SK-N-SH (cell line): ENCODE measurements at regions of chr1 and their contacts with region 1.

Region 1: DNA sequence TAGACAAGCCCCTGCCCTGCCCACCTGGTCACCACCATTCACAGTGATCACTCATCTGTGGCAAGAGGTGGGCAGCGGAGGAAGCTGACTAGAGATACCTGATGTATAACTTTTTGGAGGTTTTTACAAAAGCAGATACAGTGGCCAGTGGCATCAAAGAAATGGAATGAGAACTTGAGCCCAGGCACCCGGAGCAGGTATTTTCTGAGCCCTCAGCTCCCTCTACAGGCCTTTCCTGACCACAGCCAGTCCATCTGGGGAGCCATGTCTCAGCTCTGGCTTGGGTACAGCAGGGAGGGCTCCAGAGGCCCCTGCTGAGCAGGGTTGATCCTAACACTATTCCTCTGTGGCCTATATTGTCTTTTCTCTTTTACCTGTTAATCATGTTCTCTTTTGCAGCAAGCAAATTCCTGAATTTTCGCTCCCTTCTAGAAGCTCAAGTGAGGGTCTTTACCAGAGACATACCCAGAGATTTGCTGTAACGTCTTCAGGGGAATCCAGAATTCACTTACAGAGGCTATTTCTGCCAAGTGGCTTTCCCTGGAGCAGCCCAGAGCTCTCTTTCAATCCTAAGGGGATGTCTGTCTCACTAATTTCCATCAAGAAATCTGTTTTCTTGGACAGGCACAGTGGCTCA is 27.3 kb downstream of the GPR157 start:
- DNase-seq: peak; percentile 68
- H3K4me3 ChIP-seq: no peak overlapping the region
- H3K27ac ChIP-seq: no peak overlapping the region
- H3K4me1 ChIP-seq: no peaks in the 10 kb centered on the region
- H3K27me3 ChIP-seq: no peaks in the 10 kb centered on the region
- CTCF ChIP-seq: peak; percentile 61
- EP300 ChIP-seq: no peak
- RAD21 ChIP-seq: peak; percentile 73

Region 2: DNA sequence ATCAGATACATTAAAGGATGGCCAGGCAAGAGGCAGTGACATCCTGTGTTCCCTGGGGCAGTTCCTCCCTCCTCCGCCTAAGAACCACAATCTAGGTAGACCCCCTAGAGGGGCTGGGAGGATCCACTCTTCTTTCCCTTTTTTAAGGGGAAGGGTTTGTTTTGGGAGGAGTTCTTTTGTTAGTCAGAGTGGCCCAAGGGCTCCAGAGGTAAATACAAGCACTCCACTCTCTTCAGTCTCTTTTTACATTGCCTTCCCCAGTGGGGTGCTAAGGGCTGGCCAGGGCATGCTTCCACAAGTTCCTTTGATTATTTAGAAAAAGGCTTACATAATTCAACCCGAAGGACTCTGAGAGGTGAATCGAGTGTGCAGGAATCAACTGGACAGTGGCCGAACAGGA is 190.2 kb before region 1 on chr1:
- CTCF ChIA-PET with region 1: interaction called, 10 read pairs
- POLR2A ChIA-PET with region 1: no interaction called
- DNase-seq: no peak
- H3K4me3 ChIP-seq: no peak overlapping the region
- H3K27ac ChIP-seq: no peak overlapping the region
- H3K4me1 ChIP-seq: no peaks in the 10 kb centered on the region
- H3K27me3 ChIP-seq: no peaks in the 10 kb centered on the region
- CTCF ChIP-seq: no peak
- EP300 ChIP-seq: no peak
- RAD21 ChIP-seq: no peak

Region 3: DNA sequence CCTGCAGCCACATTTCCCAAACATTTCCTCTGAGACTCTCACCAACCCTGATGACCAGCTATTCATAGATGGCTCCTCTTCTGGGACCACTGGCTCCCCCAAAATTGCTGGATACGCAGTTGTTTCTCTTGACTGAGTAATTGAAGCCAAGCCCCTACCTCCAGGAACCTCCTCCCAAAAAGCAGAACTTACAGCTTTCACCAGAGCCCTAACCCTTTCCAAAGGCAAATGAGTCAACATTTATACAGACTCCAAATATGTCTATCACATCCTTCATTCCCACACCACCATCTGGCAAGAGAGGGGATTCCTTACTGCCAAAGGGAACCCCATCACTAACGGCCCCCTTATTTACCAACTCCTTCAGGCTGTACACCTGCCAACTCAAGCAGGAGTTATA is 176.2 kb before region 1 on chr1:
- CTCF ChIA-PET with region 1: interaction called, 24 read pairs
- POLR2A ChIA-PET with region 1: no interaction called
- DNase-seq: no peak
- H3K4me3 ChIP-seq: no peak overlapping the region
- H3K27ac ChIP-seq: no peak overlapping the region
- H3K4me1 ChIP-seq: no peaks in the 10 kb centered on the region
- H3K27me3 ChIP-seq: no peaks in the 10 kb centered on the region
- CTCF ChIP-seq: no peak
- EP300 ChIP-seq: no peak
- RAD21 ChIP-seq: no peak

Region 4: GRCh38 chr1:8987881-8988617 is 113.6 kb before region 1 on chr1:
- CTCF ChIA-PET with region 1: interaction called, 10 read pairs
- POLR2A ChIA-PET with region 1: no interaction called
- DNase-seq: peak; percentile 78
- H3K4me3 ChIP-seq: no peak overlapping the region; a peak in 1 of 4 replicates
- H3K27ac ChIP-seq: peak overlapping the region in 1 of 2 experiments; percentile 45; a peak in 1 of 4 replicates
- H3K4me1 ChIP-seq: no peaks in the 10 kb centered on the region; a peak in 1 of 4 replicates
- H3K27me3 ChIP-seq: no peaks in the 10 kb centered on the region
- CTCF ChIP-seq: peak; percentile 89
- EP300 ChIP-seq: no peak
- RAD21 ChIP-seq: peak; percentile 80

Region 5: GRCh38 chr1:9084906-9085305 is 16.7 kb before region 1 on chr1:
- CTCF ChIA-PET with region 1: interaction called, 10 read pairs
- POLR2A ChIA-PET with region 1: no interaction called
- DNase-seq: no peak
- H3K4me3 ChIP-seq: no peak overlapping the region
- H3K27ac ChIP-seq: no peak overlapping the region; a peak in 1 of 4 replicates
- H3K4me1 ChIP-seq: peaks cover 0 to 7% of the 10 kb centered on the region in 2 experiments; a peak in 1 of 4 replicates
- H3K27me3 ChIP-seq: no peaks in the 10 kb centered on the region; the same call in 1 of the 2 replicates
- CTCF ChIP-seq: no peak
- EP300 ChIP-seq: no peak
- RAD21 ChIP-seq: no peak

Region 6: DNA sequence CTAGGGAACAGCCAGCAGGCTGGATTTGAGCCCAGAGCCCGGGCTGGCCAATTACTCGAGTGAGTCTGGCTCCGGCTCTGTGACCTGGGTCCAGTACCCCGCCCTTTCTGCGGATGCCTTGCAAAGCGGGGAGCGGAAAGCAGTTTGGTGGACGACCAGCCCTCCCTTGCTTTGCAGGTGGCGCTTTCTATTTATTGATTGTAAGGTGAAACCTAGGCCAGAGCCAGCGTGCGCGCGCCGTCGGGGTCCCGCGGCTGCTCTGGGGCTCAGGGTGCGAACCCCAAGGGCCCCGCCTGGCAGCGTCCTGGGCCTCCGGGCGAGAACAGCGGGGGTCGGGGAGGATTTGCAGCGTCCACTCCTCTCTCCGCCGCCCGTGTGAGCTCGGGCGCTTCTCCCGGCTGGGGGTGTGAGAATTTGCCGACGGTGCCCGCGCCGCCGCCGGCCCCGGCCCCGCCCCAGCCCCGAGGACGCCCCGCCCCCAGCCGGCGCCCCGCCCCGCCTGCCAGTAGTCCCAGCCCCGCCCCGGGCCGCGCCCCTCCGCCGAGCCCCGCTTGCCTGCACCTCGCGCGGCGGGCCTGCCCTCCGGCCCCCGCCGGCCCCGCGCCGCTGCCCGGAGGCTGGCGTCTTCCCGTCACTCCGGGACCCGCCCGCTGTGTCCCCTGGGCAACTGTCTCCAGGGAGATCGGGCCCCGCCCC is 587.5 kb after region 1 on chr1:
- CTCF ChIA-PET with region 1: no interaction called
- POLR2A ChIA-PET with region 1: no interaction called
- DNase-seq: peak; percentile 94
- H3K4me3 ChIP-seq: peak overlapping the region; percentile 63
- H3K27ac ChIP-seq: no peak overlapping the region
- H3K4me1 ChIP-seq: peaks cover 0 to 18% of the 10 kb centered on the region in 2 experiments; a peak in 2 of 4 replicates
- H3K27me3 ChIP-seq: no peaks in the 10 kb centered on the region
- CTCF ChIP-seq: no peak
- EP300 ChIP-seq: no peak
- RAD21 ChIP-seq: no peak